ENCODE measurements at regions of chr7 and their contacts with region 1.

Region 1: GRCh38 chr7:130896898-130897514 is 163.0 kb upstream of the KLF14 start:
- DNase-seq: peak; percentile 87 to 94 (median 88)
- ATAC-seq: peak; percentile 94
- H3K4me3 ChIP-seq: no peak overlapping the region
- H3K27ac ChIP-seq: 0 out of 3 replicates have a peak overlapping the region, but pooled peaks have one; percentile 1
- H3K4me1 ChIP-seq: peaks cover 19 to 20% of the 10 kb centered on the region in 2 experiments
- H3K27me3 ChIP-seq: no peaks in the 10 kb centered on the region
- CTCF ChIP-seq: peak; percentile 96 to 99 (median 96)
- EP300 ChIP-seq: no peak; the same call in 1 of the 2 replicates
- POLR2A ChIP-seq: no peak
- RAD21 ChIP-seq: peak; percentile 96 to 98

Region 2: DNA sequence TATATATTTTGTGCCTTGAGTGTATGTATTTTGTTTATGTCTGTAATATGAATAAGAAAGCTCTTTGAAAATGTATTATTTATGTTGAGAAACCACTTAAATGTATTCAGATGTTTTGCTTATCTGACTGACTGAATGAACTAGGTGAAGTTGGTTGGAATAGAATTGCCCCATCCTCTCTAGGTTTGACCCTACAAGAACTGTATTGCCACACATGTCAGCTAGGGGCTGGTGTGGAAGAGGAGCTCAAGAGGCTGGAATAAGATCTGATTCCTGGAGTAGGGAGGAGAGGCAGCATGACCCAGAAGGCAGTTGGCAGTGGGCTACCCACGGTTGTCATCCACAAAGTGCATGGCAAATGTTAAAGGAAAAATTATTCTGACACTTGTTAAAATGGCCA is 680.3 kb before region 1 on chr7:
- CTCF ChIA-PET with region 1: no interaction called
- POLR2A ChIA-PET with region 1: no interaction called
- in situ Hi-C with region 1: no loop called
- intact Hi-C with region 1: no loop called
- DNase-seq: no peak
- ATAC-seq: peak; percentile 59
- H3K4me3 ChIP-seq: no peak overlapping the region
- H3K27ac ChIP-seq: no peak overlapping the region
- H3K4me1 ChIP-seq: peaks cover 7 to 13% of the 10 kb centered on the region in 2 experiments; a peak in 4 of 5 replicates
- H3K27me3 ChIP-seq: no peaks in the 10 kb centered on the region
- CTCF ChIP-seq: 0 out of 6 replicates have a peak, but pooled peaks of 2 of the 3 experiments have one; percentile 11 to 18
- EP300 ChIP-seq: no peak
- POLR2A ChIP-seq: no peak
- RAD21 ChIP-seq: no peak

Region 3: GRCh38 chr7:130632111-130632510 is 264.9 kb before region 1 on chr7:
- CTCF ChIA-PET with region 1: no interaction called
- POLR2A ChIA-PET with region 1: no interaction called
- in situ Hi-C with region 1: no loop called
- intact Hi-C with region 1: no loop called
- DNase-seq: no peak
- ATAC-seq: no peak
- H3K4me3 ChIP-seq: no peak overlapping the region
- H3K27ac ChIP-seq: no peak overlapping the region
- H3K4me1 ChIP-seq: no peaks in the 10 kb centered on the region
- H3K27me3 ChIP-seq: no peaks in the 10 kb centered on the region
- CTCF ChIP-seq: no peak
- EP300 ChIP-seq: no peak
- POLR2A ChIP-seq: no peak
- RAD21 ChIP-seq: no peak

Region 4: DNA sequence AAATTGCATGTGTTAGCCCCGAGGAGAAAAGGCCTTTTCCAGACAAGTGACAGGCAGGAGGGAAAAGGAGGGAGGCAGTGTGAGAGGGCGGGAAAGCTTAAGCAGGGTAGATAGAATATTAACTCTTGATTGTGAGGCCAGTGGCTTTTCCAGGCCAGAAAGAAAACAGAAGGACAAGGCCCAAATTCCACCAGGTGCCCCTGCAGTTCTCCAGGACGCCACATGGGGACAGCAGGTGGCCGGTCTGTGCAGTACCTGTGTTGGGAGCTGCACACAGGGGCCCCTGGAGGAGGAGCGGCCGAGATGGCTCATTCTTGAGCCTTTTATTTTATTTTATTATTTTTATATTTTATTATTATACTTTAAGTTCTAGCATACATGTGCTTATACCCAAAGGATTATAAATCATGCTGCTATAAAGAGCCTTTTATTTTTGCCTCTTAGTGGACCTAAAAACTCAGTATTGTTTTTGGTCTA is 21.7 kb before region 1 on chr7:
- CTCF ChIA-PET with region 1: interaction called, 3 read pairs
- POLR2A ChIA-PET with region 1: interaction called, 3 read pairs
- in situ Hi-C with region 1: no loop called
- intact Hi-C with region 1: loop called (anchors 1 kb)
- DNase-seq: peak; percentile 79 to 93 (median 90)
- ATAC-seq: peak; percentile 100
- H3K4me3 ChIP-seq: no peak overlapping the region
- H3K27ac ChIP-seq: no peak overlapping the region
- H3K4me1 ChIP-seq: no peaks in the 10 kb centered on the region
- H3K27me3 ChIP-seq: no peaks in the 10 kb centered on the region
- CTCF ChIP-seq: peak; percentile 97 to 99 (median 99)
- EP300 ChIP-seq: no peak
- POLR2A ChIP-seq: no peak
- RAD21 ChIP-seq: peak; percentile 72 to 93

Region 5: DNA sequence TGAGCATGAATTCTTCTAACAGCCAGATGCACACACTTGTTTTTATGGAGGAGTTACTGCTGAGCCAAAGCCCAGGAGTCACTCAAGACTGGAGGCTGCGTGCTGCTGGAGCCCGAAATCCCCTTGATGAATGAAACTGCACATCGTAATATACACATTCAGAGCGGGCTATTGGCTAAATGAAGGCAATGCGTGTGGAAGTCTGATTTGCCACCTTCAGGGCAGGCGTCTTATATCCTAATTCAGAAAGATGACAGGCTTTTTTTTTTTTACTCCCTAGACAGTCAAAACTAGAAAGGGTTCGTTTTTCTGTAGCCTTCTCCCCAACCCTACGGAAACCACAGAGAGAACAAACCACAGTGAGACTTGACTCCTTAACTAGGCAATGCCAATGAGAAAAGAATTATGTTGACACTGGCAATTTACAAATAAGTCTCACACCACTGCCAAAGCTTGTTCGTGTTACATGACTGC is 64.2 kb after region 1 on chr7:
- CTCF ChIA-PET with region 1: no interaction called
- POLR2A ChIA-PET with region 1: interaction called, 5 read pairs
- in situ Hi-C with region 1: no loop called
- intact Hi-C with region 1: loop called (anchors 2 kb)
- DNase-seq: peak in 1 of 4 experiments; percentile 35
- ATAC-seq: peak; percentile 57
- H3K4me3 ChIP-seq: no peak overlapping the region
- H3K27ac ChIP-seq: peak overlapping the region; percentile 3; the same call in 2 of the 3 replicates
- H3K4me1 ChIP-seq: peaks cover 0 to 22% of the 10 kb centered on the region in 2 experiments; a peak in 4 of 5 replicates
- H3K27me3 ChIP-seq: no peaks in the 10 kb centered on the region
- CTCF ChIP-seq: no peak
- EP300 ChIP-seq: no peak
- POLR2A ChIP-seq: no peak
- RAD21 ChIP-seq: no peak

Region 6: GRCh38 chr7:131040467-131040932 is 143.5 kb after region 1 on chr7:
- CTCF ChIA-PET with region 1: interaction called, 51 read pairs
- POLR2A ChIA-PET with region 1: interaction called, 3 read pairs
- in situ Hi-C with region 1: loop called (anchors 5 kb)
- intact Hi-C with region 1: loop called (anchors 1 kb)
- DNase-seq: peak; percentile 72 to 81 (median 77)
- ATAC-seq: peak; percentile 95
- H3K4me3 ChIP-seq: no peak overlapping the region
- H3K27ac ChIP-seq: no peak overlapping the region
- H3K4me1 ChIP-seq: no peaks in the 10 kb centered on the region; a peak in 2 of 5 replicates
- H3K27me3 ChIP-seq: no peaks in the 10 kb centered on the region
- CTCF ChIP-seq: peak; percentile 91 to 98 (median 96)
- EP300 ChIP-seq: no peak
- POLR2A ChIP-seq: no peak
- RAD21 ChIP-seq: peak; percentile 90 to 95

Region 7: DNA sequence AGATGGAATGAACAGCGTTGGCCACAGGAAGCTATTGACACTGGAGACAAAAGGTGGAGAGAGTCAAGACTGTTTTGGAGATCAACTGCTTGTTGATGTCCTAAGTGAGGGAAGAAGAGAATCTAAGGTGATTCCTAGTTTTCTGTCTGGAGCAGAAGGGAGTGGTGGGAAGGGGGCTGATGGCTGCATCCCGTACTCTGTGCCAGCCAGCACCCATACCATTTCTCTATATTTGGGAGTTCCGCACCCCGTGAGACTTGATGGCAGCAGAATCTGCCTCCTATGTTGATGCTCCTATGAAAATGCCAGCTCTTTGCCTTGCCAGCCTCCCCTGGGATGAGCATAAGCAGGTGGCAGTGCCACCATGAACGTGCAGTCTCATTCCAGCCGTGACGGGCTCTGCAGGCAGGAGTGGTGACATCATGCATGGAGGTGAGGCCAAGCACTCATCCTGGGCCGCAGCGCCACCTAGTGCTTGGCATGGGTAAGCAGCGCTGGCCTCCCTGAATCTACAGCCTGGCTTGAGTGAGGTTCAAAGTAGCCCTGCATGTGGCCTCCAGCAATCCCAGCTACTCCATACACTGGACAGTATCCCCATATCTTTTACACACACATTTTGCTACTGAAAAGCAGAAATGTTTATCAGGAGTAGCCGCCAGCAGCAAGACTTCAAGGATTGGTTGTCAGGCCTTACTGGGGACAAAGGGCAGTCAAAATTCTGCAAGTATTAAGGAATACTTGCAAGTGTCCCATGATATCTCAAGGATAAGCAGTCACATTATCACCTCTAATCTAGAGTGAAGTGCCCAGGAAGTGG is 616.4 kb after region 1 on chr7:
- CTCF ChIA-PET with region 1: interaction called, 4 read pairs
- POLR2A ChIA-PET with region 1: no interaction called
- in situ Hi-C with region 1: no loop called
- intact Hi-C with region 1: loop called (anchors 2 kb)
- DNase-seq: peak; percentile 87 to 97 (median 94)
- ATAC-seq: peak; percentile 99
- H3K4me3 ChIP-seq: no peak overlapping the region
- H3K27ac ChIP-seq: no peak overlapping the region
- H3K4me1 ChIP-seq: peaks cover 0 to 2% of the 10 kb centered on the region in 2 experiments; a peak in 1 of 5 replicates
- H3K27me3 ChIP-seq: peaks cover 43 to 52% of the 10 kb centered on the region in 2 experiments
- CTCF ChIP-seq: peak; percentile 96 to 99 (median 98)
- EP300 ChIP-seq: no peak
- POLR2A ChIP-seq: no peak
- RAD21 ChIP-seq: peak; percentile 83 to 92